ENCODE measurements at regions of chr2 and their contacts with region 1.

Region 1: DNA sequence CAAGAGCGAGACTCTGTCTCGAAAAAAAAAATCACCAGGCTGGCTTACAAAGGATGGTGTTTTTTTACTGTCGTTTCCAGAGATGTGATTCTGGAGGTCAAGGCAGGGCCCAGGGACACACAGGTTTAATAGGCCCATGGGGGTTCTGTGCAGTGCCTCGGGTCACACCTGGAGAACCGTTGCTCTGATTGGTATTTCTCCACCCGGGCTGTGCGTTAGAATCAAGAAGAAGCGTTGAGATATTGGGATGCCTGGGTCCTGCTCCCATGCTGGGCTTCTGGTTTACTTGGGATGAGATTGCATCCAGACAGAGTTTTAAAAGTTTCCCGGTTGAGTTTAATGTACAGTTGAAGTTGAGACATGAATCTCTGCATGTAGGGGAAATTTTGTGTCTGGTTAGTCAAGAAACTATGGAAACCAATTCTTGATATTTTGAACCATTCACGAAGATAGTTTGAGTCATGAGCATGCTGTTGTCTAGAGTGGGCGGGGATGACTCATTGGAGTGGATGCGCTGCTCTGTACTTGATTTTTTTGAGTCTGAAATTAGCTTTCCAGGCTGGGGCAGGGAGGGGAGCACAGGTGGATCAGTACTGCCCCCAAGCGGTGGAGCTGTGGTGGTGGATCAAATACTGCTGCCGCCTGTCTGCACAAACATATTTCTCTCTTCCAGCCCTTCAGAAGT is 50.1 kb downstream of the GREB1 start:
- DNase-seq: peak; percentile 93
- H3K4me3 Mint-ChIP-seq: no peak overlapping the region
- H3K27ac Mint-ChIP-seq: no peak overlapping the region
- H3K4me1 Mint-ChIP-seq: peaks cover 7% of the 10 kb centered on the region
- H3K27me3 Mint-ChIP-seq: peaks cover 9% of the 10 kb centered on the region
- CTCF ChIP-seq: peak; percentile 91

Region 2: GRCh38 chr2:11129598-11130449 is 454.2 kb before region 1 on chr2:
- CTCF ChIA-PET with region 1: interaction called, 55 read pairs
- POLR2A ChIA-PET with region 1: no interaction called
- intact Hi-C with region 1: loop called (anchors 1 kb)
- DNase-seq: peak; percentile 34
- H3K4me3 Mint-ChIP-seq: peak overlapping the region; percentile 21
- H3K27ac Mint-ChIP-seq: no peak overlapping the region
- H3K4me1 Mint-ChIP-seq: peaks cover 7% of the 10 kb centered on the region
- H3K27me3 Mint-ChIP-seq: peaks cover 11% of the 10 kb centered on the region
- CTCF ChIP-seq: no peak

Region 3: DNA sequence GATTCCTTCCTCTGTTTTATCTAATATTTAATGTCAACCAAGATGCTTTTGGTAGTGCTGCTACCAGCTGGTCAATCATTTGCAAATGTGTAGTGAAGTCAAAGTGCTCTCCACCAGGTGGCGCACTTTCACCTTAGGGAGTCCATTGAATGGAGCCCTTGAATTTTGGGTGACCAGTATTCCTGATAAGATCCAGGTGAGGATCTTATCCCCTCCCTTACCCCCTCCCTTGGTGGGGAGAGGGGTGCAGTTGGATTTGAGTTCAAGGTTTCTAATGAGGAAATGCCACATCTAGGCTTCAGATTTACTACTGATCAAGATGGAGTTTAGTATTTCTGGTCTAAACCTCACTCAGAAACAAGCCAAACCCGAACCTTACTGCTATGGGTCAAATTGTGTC is 106.0 kb before region 1 on chr2:
- CTCF ChIA-PET with region 1: interaction called, 299 read pairs
- POLR2A ChIA-PET with region 1: interaction called, 11 read pairs
- intact Hi-C with region 1: loop called (anchors 1 kb)
- DNase-seq: peak; percentile 93
- H3K4me3 Mint-ChIP-seq: no peak overlapping the region
- H3K27ac Mint-ChIP-seq: no peak overlapping the region
- H3K4me1 Mint-ChIP-seq: peaks cover 2% of the 10 kb centered on the region
- H3K27me3 Mint-ChIP-seq: peaks cover 27% of the 10 kb centered on the region
- CTCF ChIP-seq: peak; percentile 77

Region 4: DNA sequence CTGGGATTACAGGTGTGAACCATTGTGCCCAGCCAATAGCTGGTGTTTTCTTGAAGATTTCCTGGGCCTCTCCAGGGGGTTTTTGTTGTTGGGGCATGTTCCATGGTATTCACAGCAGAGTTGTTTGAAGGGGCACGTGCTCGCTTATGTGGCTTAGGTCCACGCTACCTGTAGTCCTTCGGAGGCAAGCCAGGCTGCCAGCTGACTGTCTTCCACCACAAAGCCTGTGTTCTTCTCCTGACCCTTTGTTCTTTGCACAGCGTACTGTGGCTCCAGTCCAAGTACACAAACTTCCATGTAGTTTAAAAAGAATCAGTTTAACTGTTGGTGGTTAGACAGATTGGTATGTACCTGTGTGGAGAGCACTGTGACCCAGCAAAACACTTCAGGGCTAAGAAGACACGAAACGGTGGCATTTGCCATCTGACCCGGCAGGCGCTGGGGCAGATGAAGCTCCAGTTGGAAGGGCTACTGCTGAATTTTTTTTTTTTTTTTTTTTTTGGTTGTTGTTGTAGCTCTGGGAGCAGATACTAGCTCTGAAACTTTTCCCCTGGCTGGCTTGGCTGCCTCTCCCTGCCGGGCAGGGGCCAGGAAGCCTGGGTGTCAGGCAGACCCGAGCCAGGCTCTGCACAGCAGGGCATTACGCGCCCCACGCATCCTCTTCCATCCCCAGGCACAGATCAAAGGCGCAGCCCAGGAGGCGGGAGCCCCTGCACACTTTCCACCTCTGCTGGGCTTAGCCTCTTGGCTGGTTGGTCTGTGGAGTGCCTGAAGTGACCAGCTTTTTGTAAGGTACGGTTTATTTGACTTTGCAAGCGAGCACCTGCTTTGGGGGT is 44.4 kb before region 1 on chr2:
- CTCF ChIA-PET with region 1: interaction called, 28 read pairs
- POLR2A ChIA-PET with region 1: interaction called, 8 read pairs
- intact Hi-C with region 1: no loop called
- DNase-seq: peak; percentile 56
- H3K4me3 Mint-ChIP-seq: peak overlapping the region; percentile 69
- H3K27ac Mint-ChIP-seq: peak overlapping the region; percentile 3
- H3K4me1 Mint-ChIP-seq: peaks cover 42% of the 10 kb centered on the region
- H3K27me3 Mint-ChIP-seq: peaks cover 10% of the 10 kb centered on the region
- CTCF ChIP-seq: no peak

Region 5: GRCh38 chr2:11568436-11568835 is 15.5 kb before region 1 on chr2:
- CTCF ChIA-PET with region 1: interaction called, 31 read pairs
- POLR2A ChIA-PET with region 1: no interaction called
- intact Hi-C with region 1: no loop called
- DNase-seq: no peak
- H3K4me3 Mint-ChIP-seq: no peak overlapping the region
- H3K27ac Mint-ChIP-seq: no peak overlapping the region
- H3K4me1 Mint-ChIP-seq: peaks cover 5% of the 10 kb centered on the region
- H3K27me3 Mint-ChIP-seq: no peaks in the 10 kb centered on the region
- CTCF ChIP-seq: no peak

Region 6: DNA sequence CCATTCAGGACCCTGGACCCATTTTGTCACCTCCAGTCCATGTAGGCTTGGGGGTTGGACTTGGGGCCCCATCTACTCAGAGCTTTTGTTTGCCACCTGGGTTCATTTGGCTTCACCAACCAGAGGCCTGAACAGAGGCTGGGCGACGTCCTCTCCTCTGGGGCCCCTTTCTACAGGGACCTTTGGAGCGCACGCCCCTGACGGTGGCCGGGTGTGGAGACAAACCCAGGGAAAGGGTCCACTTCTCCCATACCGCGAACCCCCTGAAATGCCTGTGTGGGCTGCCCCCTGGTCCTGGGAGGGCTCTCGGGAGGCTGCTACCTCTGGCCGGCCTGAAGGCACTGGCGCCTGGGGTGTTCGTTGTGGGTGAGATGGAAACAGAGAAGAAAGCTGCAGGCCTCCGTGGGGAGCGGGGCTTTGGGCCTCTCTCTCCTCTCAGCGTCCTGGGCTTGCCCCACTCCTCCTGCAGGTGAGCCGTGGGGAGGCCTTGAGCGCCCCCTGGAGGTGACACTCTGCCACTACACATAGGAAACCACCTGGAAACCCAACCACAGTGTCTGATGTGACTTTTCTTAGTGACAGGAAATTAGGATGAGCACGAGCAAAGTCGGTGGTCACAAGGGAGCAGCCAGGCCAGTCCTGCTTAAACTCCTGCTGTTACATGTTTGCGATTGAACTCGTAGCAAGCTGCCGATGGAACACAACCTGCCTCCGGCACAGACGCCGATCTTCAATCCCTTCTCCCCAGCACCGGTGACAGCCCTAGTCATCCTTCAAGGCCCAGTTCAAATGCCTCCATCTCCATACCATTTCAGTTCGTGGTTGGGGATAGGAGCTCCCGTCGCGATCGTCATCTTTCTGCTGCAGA is 98.0 kb after region 1 on chr2:
- CTCF ChIA-PET with region 1: interaction called, 44 read pairs
- POLR2A ChIA-PET with region 1: no interaction called
- intact Hi-C with region 1: loop called (anchors 1 kb)
- DNase-seq: peak; percentile 59
- H3K4me3 Mint-ChIP-seq: no peak overlapping the region
- H3K27ac Mint-ChIP-seq: no peak overlapping the region
- H3K4me1 Mint-ChIP-seq: peaks cover 18% of the 10 kb centered on the region
- H3K27me3 Mint-ChIP-seq: peaks cover 31% of the 10 kb centered on the region
- CTCF ChIP-seq: peak; percentile 96

Measured in MCF 10A (cell line).